ENCODE measurements at regions of chr18 and their contacts with region 1.

Region 1: GRCh38 chr18:62721839-62722795 is 6.8 kb downstream of the PHLPP1 start:
- DNase-seq: no peak
- H3K4me3 ChIP-seq: no peak overlapping the region
- H3K27ac ChIP-seq: no peak overlapping the region
- H3K4me1 ChIP-seq: peaks cover 6 to 46% (median 15%) of the 10 kb centered on the region in 4 donors
- H3K27me3 ChIP-seq: no peaks in the 10 kb centered on the region
- CTCF ChIP-seq: no peak
- EP300 ChIP-seq: no peak
- POLR2A ChIP-seq: no peak

Region 2: GRCh38 chr18:62610701-62611411 is 111.3 kb before region 1 on chr18:
- in situ Hi-C with region 1: no loop called
- intact Hi-C with region 1: no loop called
- DNase-seq: no peak
- H3K4me3 ChIP-seq: no peak overlapping the region
- H3K27ac ChIP-seq: no peak overlapping the region
- H3K4me1 ChIP-seq: peaks cover 0 to 6% (median 0%) of the 10 kb centered on the region in 4 donors
- H3K27me3 ChIP-seq: no peaks in the 10 kb centered on the region
- CTCF ChIP-seq: no peak
- EP300 ChIP-seq: no peak
- POLR2A ChIP-seq: no peak

Region 3: DNA sequence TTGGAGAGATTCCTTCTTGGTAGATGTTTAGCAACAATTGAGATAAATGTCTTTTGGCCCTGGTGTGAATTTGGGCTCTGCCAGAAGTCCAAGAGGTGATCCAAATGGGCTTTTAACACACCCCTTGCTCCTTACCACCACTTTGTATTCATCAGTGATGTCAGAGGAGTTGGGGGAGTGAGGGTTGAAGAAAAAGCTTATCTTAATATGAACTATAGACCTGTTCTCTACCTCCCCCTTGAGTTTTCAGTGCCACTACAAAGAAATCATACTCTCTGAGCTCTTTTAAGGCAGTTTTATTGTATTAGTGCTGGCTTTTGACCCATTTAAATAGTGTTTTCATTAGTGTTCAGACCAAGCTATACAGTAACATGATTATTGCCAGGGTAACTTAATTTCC is 222.3 kb after region 1 on chr18:
- in situ Hi-C with region 1: no loop called
- intact Hi-C with region 1: no loop called
- DNase-seq: no peak
- H3K4me3 ChIP-seq: no peak overlapping the region
- H3K27ac ChIP-seq: no peak overlapping the region
- H3K4me1 ChIP-seq: peaks cover 0 to 5% (median 0%) of the 10 kb centered on the region in 4 donors
- H3K27me3 ChIP-seq: no peaks in the 10 kb centered on the region
- CTCF ChIP-seq: no peak
- EP300 ChIP-seq: no peak
- POLR2A ChIP-seq: no peak

Region 4: GRCh38 chr18:63262369-63263335 is 540.5 kb after region 1 on chr18:
- in situ Hi-C with region 1: no loop called
- intact Hi-C with region 1: loop called (anchors 5 kb)
- DNase-seq: no peak
- H3K4me3 ChIP-seq: no peak overlapping the region
- H3K27ac ChIP-seq: peak overlapping the region; percentile 52 to 79 (median 62)
- H3K4me1 ChIP-seq: peaks cover 6 to 53% (median 22%) of the 10 kb centered on the region in 4 donors
- H3K27me3 ChIP-seq: no peaks in the 10 kb centered on the region
- CTCF ChIP-seq: no peak
- EP300 ChIP-seq: no peak
- POLR2A ChIP-seq: no peak